Posterior vena cava (tissue), 2 donors: ENCODE measurements at regions of chr5 and their contacts with region 1.

Region 1: GRCh38 chr5:116838011-116838536 is 263.5 kb upstream of the SEMA6A start:
- DNase-seq: no peak

Region 2: GRCh38 chr5:116788851-116789403 is 49.1 kb before region 1 on chr5:
- intact Hi-C with region 1: loop called in 1 of 2 experiments (anchors 5 kb)
- DNase-seq: no peak